A673 (cell line): ENCODE measurements at regions of chr19 and their contacts with region 1.

Region 1: GRCh38 chr19:18251587-18252369 is 22.5 kb downstream of the IQCN start:
- DNase-seq: peak; percentile 80
- H3K4me3 ChIP-seq: no peak overlapping the region
- H3K27ac ChIP-seq: no peak overlapping the region
- H3K4me1 ChIP-seq: no peaks in the 10 kb centered on the region
- H3K27me3 ChIP-seq: peaks cover 6% of the 10 kb centered on the region
- CTCF ChIP-seq: peak; percentile 98

Region 2: DNA sequence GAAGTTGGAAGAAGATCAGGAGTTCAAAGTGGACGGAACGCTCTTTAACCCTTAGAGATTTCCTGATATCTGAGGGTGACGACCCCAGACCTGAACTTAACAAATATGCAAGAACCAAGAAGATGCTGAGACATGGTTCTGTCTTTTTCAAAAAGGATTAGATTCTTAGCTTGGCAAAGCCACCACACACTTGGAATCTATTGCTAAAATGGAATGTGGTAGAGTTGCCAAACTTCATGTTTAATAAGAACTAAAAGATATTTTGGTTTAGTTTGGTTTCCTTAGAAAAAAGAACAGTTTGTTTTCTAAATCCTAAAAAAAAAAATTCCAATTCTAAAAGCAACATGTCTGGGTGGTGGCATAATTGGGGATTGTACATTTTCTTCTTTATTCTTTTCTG is 593.1 kb before region 1 on chr19:
- CTCF ChIA-PET with region 1: interaction called, 12 read pairs
- POLR2A ChIA-PET with region 1: no interaction called
- intact Hi-C with region 1: no loop called
- DNase-seq: no peak
- H3K4me3 ChIP-seq: no peak overlapping the region
- H3K27ac ChIP-seq: no peak overlapping the region
- H3K4me1 ChIP-seq: no peaks in the 10 kb centered on the region
- H3K27me3 ChIP-seq: no peaks in the 10 kb centered on the region
- CTCF ChIP-seq: no peak

Region 3: GRCh38 chr19:18007044-18007916 is 244.5 kb before region 1 on chr19:
- CTCF ChIA-PET with region 1: no interaction called
- POLR2A ChIA-PET with region 1: no interaction called
- intact Hi-C with region 1: loop called (anchors 5 kb)
- DNase-seq: peak; percentile 83
- H3K4me3 ChIP-seq: peak overlapping the region; percentile 43
- H3K27ac ChIP-seq: no peak overlapping the region
- H3K4me1 ChIP-seq: peaks cover 8% of the 10 kb centered on the region
- H3K27me3 ChIP-seq: no peaks in the 10 kb centered on the region
- CTCF ChIP-seq: peak; percentile 99

Region 4: GRCh38 chr19:18112989-18113478 is 138.7 kb before region 1 on chr19:
- CTCF ChIA-PET with region 1: interaction called, 23 read pairs
- POLR2A ChIA-PET with region 1: no interaction called
- intact Hi-C with region 1: loop called (anchors 2 kb)
- DNase-seq: peak; percentile 86
- H3K4me3 ChIP-seq: no peak overlapping the region
- H3K27ac ChIP-seq: no peak overlapping the region
- H3K4me1 ChIP-seq: peaks cover 10% of the 10 kb centered on the region
- H3K27me3 ChIP-seq: no peaks in the 10 kb centered on the region
- CTCF ChIP-seq: peak; percentile 84